IMR-90 (cell line): ENCODE measurements at regions of chr1 and their contacts with region 1.

Region 1: GRCh38 chr1:177883581-177883980 is 86.3 kb downstream of the SEC16B start:
- DNase-seq: no peak
- ATAC-seq: no peak
- H3K4me3 ChIP-seq: no peak overlapping the region
- H3K27ac ChIP-seq: no peak overlapping the region
- H3K4me1 ChIP-seq: no peaks in the 10 kb centered on the region
- H3K27me3 ChIP-seq: no peaks in the 10 kb centered on the region
- CTCF ChIP-seq: no peak
- POLR2A ChIP-seq: no peak
- RAD21 ChIP-seq: no peak

Region 2: DNA sequence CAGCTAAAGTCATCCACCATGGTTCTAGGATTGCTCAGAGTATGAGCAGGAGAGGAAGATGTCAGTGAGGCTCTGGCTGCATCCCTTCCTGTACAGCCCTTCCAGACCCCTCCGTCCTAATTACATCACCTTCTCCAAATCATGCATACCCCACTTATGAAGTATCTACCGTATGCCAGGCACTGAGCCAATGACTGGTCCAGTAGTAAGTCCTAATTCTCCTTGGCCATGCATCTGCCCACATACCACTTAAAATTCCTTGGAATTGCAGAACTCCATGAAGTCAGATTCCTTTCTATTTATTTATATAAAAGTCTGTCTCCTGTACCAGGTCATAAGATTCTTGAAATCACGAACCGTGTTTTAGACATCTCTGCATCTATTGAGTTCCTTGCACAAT is 19.8 kb before region 1 on chr1:
- CTCF ChIA-PET with region 1: no interaction called
- POLR2A ChIA-PET with region 1: no interaction called
- dilution Hi-C with region 1: no loop called
- in situ Hi-C with region 1: no loop called
- intact Hi-C with region 1: loop called (anchors 2 kb)
- DNase-seq: peak; percentile 48
- ATAC-seq: peak; percentile 38
- H3K4me3 ChIP-seq: no peak overlapping the region
- H3K27ac ChIP-seq: no peak overlapping the region
- H3K4me1 ChIP-seq: peaks cover 2% of the 10 kb centered on the region; the same call in 1 of the 2 replicates
- H3K27me3 ChIP-seq: no peaks in the 10 kb centered on the region
- CTCF ChIP-seq: no peak
- POLR2A ChIP-seq: no peak
- RAD21 ChIP-seq: no peak

Region 3: DNA sequence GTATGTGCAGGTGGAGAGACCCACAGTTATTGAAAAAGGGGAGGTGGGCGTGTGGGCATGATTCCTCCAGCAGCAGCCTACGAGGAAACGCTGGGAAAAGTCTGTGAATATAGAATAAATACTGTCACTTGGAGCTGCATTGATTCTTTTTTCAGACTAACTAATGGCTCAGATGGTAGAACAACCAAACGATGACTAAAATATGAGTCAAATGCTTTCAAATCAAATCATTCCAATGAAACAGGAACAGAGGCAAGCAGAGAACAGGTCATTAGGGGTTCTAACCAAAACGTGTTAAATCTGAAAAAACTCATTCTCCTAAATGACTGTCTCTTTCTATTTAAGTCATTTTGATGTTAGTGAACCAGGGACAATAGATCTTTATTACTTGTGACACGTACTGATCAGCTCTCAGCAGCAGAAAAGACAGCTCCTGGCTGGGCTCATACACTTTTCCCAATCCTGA is 121.4 kb after region 1 on chr1:
- CTCF ChIA-PET with region 1: no interaction called
- POLR2A ChIA-PET with region 1: no interaction called
- dilution Hi-C with region 1: no loop called
- in situ Hi-C with region 1: no loop called
- intact Hi-C with region 1: no loop called
- DNase-seq: peak; percentile 72
- ATAC-seq: peak; percentile 79
- H3K4me3 ChIP-seq: no peak overlapping the region
- H3K27ac ChIP-seq: no peak overlapping the region
- H3K4me1 ChIP-seq: peaks cover 2% of the 10 kb centered on the region
- H3K27me3 ChIP-seq: peaks cover 2% of the 10 kb centered on the region
- CTCF ChIP-seq: no peak
- POLR2A ChIP-seq: no peak
- RAD21 ChIP-seq: no peak